ENCODE measurements at regions of chr18 and their contacts with region 1.

Region 1: GRCh38 chr18:62982600-62983251 is 267.4 kb downstream of the PHLPP1 start:
- DNase-seq: peak; percentile 32
- ATAC-seq: peak; percentile 78
- H3K4me3 ChIP-seq: no peak overlapping the region
- H3K27ac ChIP-seq: no peak overlapping the region
- H3K4me1 ChIP-seq: no peaks in the 10 kb centered on the region
- H3K27me3 ChIP-seq: no peaks in the 10 kb centered on the region
- CTCF ChIP-seq: peak; percentile 77 to 87 (median 79)
- POLR2A ChIP-seq: no peak
- RAD21 ChIP-seq: peak; percentile 90

Region 2: GRCh38 chr18:62584241-62585120 is 398.2 kb before region 1 on chr18:
- CTCF ChIA-PET with region 1: interaction called, 34 read pairs
- POLR2A ChIA-PET with region 1: no interaction called
- RAD21 ChIA-PET with region 1: no interaction called
- intact Hi-C with region 1: loop called (anchors 1 kb)
- DNase-seq: peak; percentile 76
- ATAC-seq: peak; percentile 90
- H3K4me3 ChIP-seq: no peak overlapping the region
- H3K27ac ChIP-seq: no peak overlapping the region
- H3K4me1 ChIP-seq: peaks cover 0 to 8% of the 10 kb centered on the region in 2 experiments; a peak in 2 of 4 replicates
- H3K27me3 ChIP-seq: no peaks in the 10 kb centered on the region
- CTCF ChIP-seq: peak; percentile 96 to 99 (median 98)
- POLR2A ChIP-seq: no peak
- RAD21 ChIP-seq: peak; percentile 92

Region 3: GRCh38 chr18:62637807-62638687 is 344.7 kb before region 1 on chr18:
- CTCF ChIA-PET with region 1: interaction called, 10 read pairs
- POLR2A ChIA-PET with region 1: no interaction called
- RAD21 ChIA-PET with region 1: interaction called in 1 of 2 experiments, 3 read pairs
- intact Hi-C with region 1: loop called (anchors 1 kb)
- DNase-seq: peak; percentile 44
- ATAC-seq: peak; percentile 91
- H3K4me3 ChIP-seq: no peak overlapping the region
- H3K27ac ChIP-seq: no peak overlapping the region
- H3K4me1 ChIP-seq: peaks cover 6 to 12% of the 10 kb centered on the region in 2 experiments; a peak in 3 of 4 replicates
- H3K27me3 ChIP-seq: no peaks in the 10 kb centered on the region
- CTCF ChIP-seq: peak; percentile 60 to 93 (median 89); a peak in 5 of 6 replicates
- POLR2A ChIP-seq: no peak
- RAD21 ChIP-seq: peak; percentile 69

Region 4: DNA sequence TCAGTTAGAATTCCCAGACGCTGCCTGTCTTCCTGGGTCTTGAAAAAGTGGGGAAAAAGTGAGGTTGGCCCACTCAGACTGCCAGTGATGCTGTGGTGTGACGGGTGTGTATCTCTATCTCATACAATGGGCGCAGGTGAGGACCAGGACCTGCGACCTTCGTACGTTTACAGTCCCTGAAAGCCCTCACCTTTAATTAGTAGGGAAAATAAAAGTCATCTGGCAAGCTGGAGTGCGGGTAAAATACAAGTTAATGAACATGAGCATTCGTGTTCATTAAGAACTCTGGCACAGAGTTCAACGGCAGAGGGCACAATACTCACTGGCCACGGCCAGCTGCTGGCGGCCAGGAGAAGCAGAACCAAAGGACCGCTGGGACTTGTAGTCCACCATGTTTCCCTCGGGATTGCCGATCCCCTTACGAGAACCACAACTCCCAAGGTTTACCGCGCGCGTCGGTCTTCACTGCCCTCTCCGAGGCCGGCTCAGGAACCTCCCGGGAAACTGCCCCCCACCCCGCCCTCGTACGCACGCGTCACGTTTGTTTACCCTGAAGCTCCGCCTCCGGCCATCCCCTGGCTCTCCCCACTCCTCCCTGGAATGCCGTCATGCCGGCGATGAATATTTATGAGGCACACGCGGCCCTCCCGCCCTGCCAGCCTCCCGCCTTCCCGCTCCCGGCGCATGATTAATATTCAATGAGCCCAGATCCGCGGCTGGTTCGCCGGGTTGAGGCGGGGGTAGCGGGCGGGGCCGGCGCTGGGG is 267.9 kb before region 1 on chr18:
- CTCF ChIA-PET with region 1: interaction called, 9 read pairs
- POLR2A ChIA-PET with region 1: no interaction called
- RAD21 ChIA-PET with region 1: interaction called in 1 of 2 experiments, 3 read pairs
- intact Hi-C with region 1: loop called (anchors 1 kb)
- DNase-seq: peak; percentile 99
- ATAC-seq: peak; percentile 90
- H3K4me3 ChIP-seq: peak overlapping the region; percentile 51 to 59
- H3K27ac ChIP-seq: no peak overlapping the region
- H3K4me1 ChIP-seq: peaks cover 8 to 27% of the 10 kb centered on the region in 2 experiments
- H3K27me3 ChIP-seq: no peaks in the 10 kb centered on the region
- CTCF ChIP-seq: peak in 2 of 3 experiments; percentile 72 to 77; a peak in 4 of 6 replicates
- POLR2A ChIP-seq: no peak
- RAD21 ChIP-seq: no peak